ENCODE measurements at regions of chr5 and their contacts with region 1.

Region 1: GRCh38 chr5:140547508-140548299 is at the start of gene EIF4EBP3:
- DNase-seq: peak; percentile 69 to 94 (median 88)
- ATAC-seq: peak; percentile 97 to 98 (median 98)
- H3K4me3 ChIP-seq: peak within 1 kb of the TSS; percentile 73 to 77
- H3K4me3 Mint-ChIP-seq: peak within 1 kb of the TSS; percentile 88 to 89 (median 89)
- H3K27ac ChIP-seq: peak within 1 kb of the TSS; percentile 77
- H3K27ac Mint-ChIP-seq: peak within 1 kb of the TSS; percentile 97 to 99
- H3K4me1 ChIP-seq: peaks cover 5 to 30% of the 10 kb centered on the region in 2 experiments
- H3K4me1 Mint-ChIP-seq: peaks cover 30 to 41% (median 32%) of the 10 kb centered on the region in 3 donors
- H3K27me3 ChIP-seq: no peaks in the 10 kb centered on the region
- H3K27me3 Mint-ChIP-seq: no peaks in the 10 kb centered on the region
- total RNA-seq, gene EIF4EBP3: 10.6 to 23.6 (median 20.4) TPM

Region 2: GRCh38 chr5:140174465-140175366 is 373.0 kb before region 1 on chr5 and contains the start of gene CYSTM1:
- CTCF ChIA-PET with region 1: no interaction called
- POLR2A ChIA-PET with region 1: no interaction called
- DNase-seq: peak; percentile 89 to 99 (median 95)
- ATAC-seq: peak; percentile 92 to 94 (median 93)
- H3K4me3 ChIP-seq: peak within 1 kb of the TSS; percentile 74 to 89
- H3K4me3 Mint-ChIP-seq: peak within 1 kb of the TSS; percentile 89 to 93 (median 91)
- H3K27ac ChIP-seq: peak within 1 kb of the TSS; percentile 77
- H3K27ac Mint-ChIP-seq: peak within 1 kb of the TSS; percentile 81 to 85
- H3K4me1 ChIP-seq: peaks cover 8 to 14% of the 10 kb centered on the region in 2 experiments
- H3K4me1 Mint-ChIP-seq: peaks cover 10 to 14% (median 13%) of the 10 kb centered on the region in 3 donors
- H3K27me3 ChIP-seq: peaks cover 2 to 7% of the 10 kb centered on the region in 2 experiments
- H3K27me3 Mint-ChIP-seq: no peaks in the 10 kb centered on the region
- total RNA-seq, gene CYSTM1: 1.9 to 6.0 (median 5.0) TPM

Region 3: GRCh38 chr5:140564196-140565023 is 16.7 kb after region 1 on chr5 and contains the starts of genes APBB3 and SLC35A4:
- CTCF ChIA-PET with region 1: interaction called, 4 to 11 read pairs
- POLR2A ChIA-PET with region 1: interaction called, 3 to 11 read pairs
- DNase-seq: peak; percentile 90 to 99 (median 99)
- ATAC-seq: peak; percentile 88 to 91 (median 90)
- H3K4me3 ChIP-seq: peak within 1 kb of the TSS; percentile 65 to 96
- H3K4me3 Mint-ChIP-seq: peak within 1 kb of the TSS; percentile 90 to 98 (median 94)
- H3K27ac ChIP-seq: peak within 1 kb of the TSS; percentile 83
- H3K27ac Mint-ChIP-seq: peak within 1 kb of the TSS; percentile 96 to 99
- H3K4me1 ChIP-seq: peaks cover 13 to 46% of the 10 kb centered on the region in 2 experiments
- H3K4me1 Mint-ChIP-seq: peaks cover 64 to 74% (median 66%) of the 10 kb centered on the region in 3 donors
- H3K27me3 ChIP-seq: no peaks in the 10 kb centered on the region
- H3K27me3 Mint-ChIP-seq: no peaks in the 10 kb centered on the region
- total RNA-seq, gene APBB3: 53.9 to 70.5 (median 64.1) TPM
- total RNA-seq, gene SLC35A4: 47.7 to 75.2 (median 72.4) TPM

Region 4: DNA sequence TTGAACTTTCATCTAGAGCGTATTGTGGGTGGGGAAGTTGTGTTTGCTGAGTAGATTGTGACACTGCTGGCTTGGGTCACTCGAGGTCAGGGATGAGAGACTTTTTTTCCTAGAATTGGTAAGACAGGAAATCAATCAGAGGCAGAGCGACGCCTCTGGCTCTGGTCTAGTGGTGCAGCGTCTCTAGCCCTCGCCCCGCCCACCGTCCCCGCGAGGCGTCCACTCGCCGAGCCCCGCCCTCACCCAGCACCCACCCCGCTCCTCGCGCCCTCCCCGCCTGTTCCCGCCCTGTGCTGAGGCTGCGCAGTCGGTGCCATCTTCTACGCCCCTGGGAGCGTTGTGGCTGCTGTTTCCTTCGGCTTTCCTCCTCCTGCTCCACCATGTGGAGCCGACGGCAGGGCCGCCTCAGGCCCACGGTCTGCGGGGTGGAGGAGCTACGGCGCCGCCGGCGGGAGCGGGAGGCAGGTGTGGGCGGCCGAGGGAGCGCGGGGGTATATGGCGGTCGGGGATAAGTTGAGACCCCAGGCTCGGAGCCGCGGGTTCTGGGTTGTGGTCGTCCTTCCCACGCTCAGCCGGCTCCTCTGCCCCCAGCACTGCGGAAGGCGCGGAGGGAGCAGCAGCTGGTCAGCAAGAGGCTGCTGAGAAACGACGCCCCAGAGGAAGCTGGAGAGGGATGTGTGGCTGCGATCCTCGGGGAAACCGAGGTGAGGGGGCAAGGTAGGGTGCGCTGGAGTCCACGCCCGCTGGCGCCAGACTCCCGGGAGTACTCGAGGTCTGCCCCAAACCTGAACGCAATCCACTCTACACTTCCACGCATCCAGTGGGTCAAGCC is 91.7 kb after region 1 on chr5 and contains the start of gene TMCO6:
- CTCF ChIA-PET with region 1: interaction called, 11 to 13 read pairs
- POLR2A ChIA-PET with region 1: no interaction called
- DNase-seq: peak; percentile 91 to 98 (median 96)
- ATAC-seq: peak; percentile 97 to 100 (median 98)
- H3K4me3 ChIP-seq: peak within 1 kb of the TSS; percentile 70 to 90
- H3K4me3 Mint-ChIP-seq: peak within 1 kb of the TSS; percentile 87 to 90 (median 88)
- H3K27ac ChIP-seq: peak within 1 kb of the TSS; percentile 88
- H3K27ac Mint-ChIP-seq: peak within 1 kb of the TSS; percentile 85 to 98
- H3K4me1 ChIP-seq: peaks cover 3 to 19% of the 10 kb centered on the region in 2 experiments
- H3K4me1 Mint-ChIP-seq: peaks cover 34 to 43% (median 38%) of the 10 kb centered on the region in 3 donors
- H3K27me3 ChIP-seq: no peaks in the 10 kb centered on the region
- H3K27me3 Mint-ChIP-seq: no peaks in the 10 kb centered on the region
- total RNA-seq, gene TMCO6: 24.9 to 56.8 (median 52.2) TPM

Region 5: DNA sequence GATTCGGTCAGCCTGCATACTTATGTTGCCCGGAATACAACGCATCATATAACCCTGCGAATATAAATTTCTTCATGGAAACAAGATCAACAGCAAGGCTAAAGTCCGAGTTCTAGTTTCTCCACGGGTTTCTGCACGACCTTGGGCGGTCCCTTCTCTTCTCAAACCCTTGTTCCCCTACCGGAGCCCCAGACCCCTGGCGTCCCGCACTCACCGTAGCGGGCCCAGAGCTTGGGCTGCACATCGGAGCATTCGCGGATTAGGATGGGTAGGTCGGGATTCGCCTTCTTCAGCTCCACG is 99.3 kb after region 1 on chr5:
- CTCF ChIA-PET with region 1: interaction called, 4 to 11 read pairs
- POLR2A ChIA-PET with region 1: interaction called, 6 to 16 read pairs
- DNase-seq: no peak
- ATAC-seq: no peak
- H3K4me3 ChIP-seq: peak overlapping the region; percentile 87 to 97
- H3K4me3 Mint-ChIP-seq: peak overlapping the region; percentile 90 to 99 (median 98)
- H3K27ac ChIP-seq: peak overlapping the region; percentile 88
- H3K27ac Mint-ChIP-seq: peak overlapping the region; percentile 97 to 99
- H3K4me1 ChIP-seq: peaks cover 12 to 32% of the 10 kb centered on the region in 2 experiments
- H3K4me1 Mint-ChIP-seq: peaks cover 51 to 60% (median 55%) of the 10 kb centered on the region in 3 donors
- H3K27me3 ChIP-seq: no peaks in the 10 kb centered on the region
- H3K27me3 Mint-ChIP-seq: no peaks in the 10 kb centered on the region